Activated B cell treated with CpG ODN at 0.5 μM for 24 hours (primary cell): ENCODE measurements at regions of chr20 and their contacts with region 1.

Region 1: GRCh38 chr20:50041246-50041873 is 58.6 kb downstream of the SNAI1 start:
- DNase-seq: peak; percentile 26
- ATAC-seq: peak; percentile 91
- H3K4me3 Mint-ChIP-seq: peak overlapping the region; percentile 73
- H3K27ac Mint-ChIP-seq: peak overlapping the region; percentile 89
- H3K4me1 Mint-ChIP-seq: peaks cover 20% of the 10 kb centered on the region
- H3K27me3 Mint-ChIP-seq: no peaks in the 10 kb centered on the region
- CTCF ChIP-seq: no peak

Region 2: GRCh38 chr20:49999329-49999728 is 42.0 kb before region 1 on chr20:
- CTCF ChIA-PET with region 1: no interaction called
- POLR2A ChIA-PET with region 1: interaction called, 15 read pairs
- intact Hi-C with region 1: loop called (anchors 1 kb)
- DNase-seq: peak; percentile 68
- ATAC-seq: peak; percentile 99
- H3K4me3 Mint-ChIP-seq: peak overlapping the region; percentile 44
- H3K27ac Mint-ChIP-seq: peak overlapping the region; percentile 14
- H3K4me1 Mint-ChIP-seq: peaks cover 24% of the 10 kb centered on the region
- H3K27me3 Mint-ChIP-seq: peaks cover 4% of the 10 kb centered on the region
- CTCF ChIP-seq: no peak

Region 3: GRCh38 chr20:50065325-50065615 is 23.9 kb after region 1 on chr20:
- CTCF ChIA-PET with region 1: no interaction called
- POLR2A ChIA-PET with region 1: no interaction called
- intact Hi-C with region 1: no loop called
- DNase-seq: no peak
- ATAC-seq: no peak
- H3K4me3 Mint-ChIP-seq: no peak overlapping the region
- H3K27ac Mint-ChIP-seq: no peak overlapping the region
- H3K4me1 Mint-ChIP-seq: no peaks in the 10 kb centered on the region
- H3K27me3 Mint-ChIP-seq: peaks cover 7% of the 10 kb centered on the region
- CTCF ChIP-seq: no peak

Region 4: DNA sequence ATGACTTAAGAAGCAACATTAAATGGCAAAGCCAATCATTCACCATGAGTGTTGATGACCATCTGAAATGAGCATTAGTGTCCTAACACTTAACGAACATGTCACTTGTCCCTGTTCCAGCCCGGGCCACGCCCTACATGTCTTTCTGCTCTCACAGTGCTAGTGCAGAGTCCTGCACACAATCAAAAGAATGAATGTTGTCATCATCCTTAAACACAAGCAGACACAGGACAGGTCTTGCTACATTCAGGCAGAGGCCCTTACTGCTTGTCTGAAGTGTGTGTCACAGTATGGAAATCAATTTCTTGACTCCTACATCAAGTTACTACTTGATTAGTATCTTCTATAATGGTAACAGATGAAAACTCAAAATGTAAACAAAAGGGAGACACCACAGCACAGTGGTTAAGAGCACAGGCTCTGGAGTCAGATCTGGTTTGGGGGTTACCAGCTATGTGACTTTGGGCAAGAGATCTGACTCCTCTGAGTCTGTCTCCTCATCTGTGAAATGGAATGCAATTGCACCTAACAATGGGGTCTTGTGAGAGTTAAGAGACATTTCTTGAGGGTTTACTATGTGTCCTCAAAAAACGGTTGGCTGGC is 54.2 kb after region 1 on chr20:
- CTCF ChIA-PET with region 1: no interaction called
- POLR2A ChIA-PET with region 1: no interaction called
- intact Hi-C with region 1: no loop called
- DNase-seq: no peak
- ATAC-seq: no peak
- H3K4me3 Mint-ChIP-seq: no peak overlapping the region
- H3K27ac Mint-ChIP-seq: no peak overlapping the region
- H3K4me1 Mint-ChIP-seq: peaks cover 22% of the 10 kb centered on the region
- H3K27me3 Mint-ChIP-seq: no peaks in the 10 kb centered on the region
- CTCF ChIP-seq: no peak

Region 5: DNA sequence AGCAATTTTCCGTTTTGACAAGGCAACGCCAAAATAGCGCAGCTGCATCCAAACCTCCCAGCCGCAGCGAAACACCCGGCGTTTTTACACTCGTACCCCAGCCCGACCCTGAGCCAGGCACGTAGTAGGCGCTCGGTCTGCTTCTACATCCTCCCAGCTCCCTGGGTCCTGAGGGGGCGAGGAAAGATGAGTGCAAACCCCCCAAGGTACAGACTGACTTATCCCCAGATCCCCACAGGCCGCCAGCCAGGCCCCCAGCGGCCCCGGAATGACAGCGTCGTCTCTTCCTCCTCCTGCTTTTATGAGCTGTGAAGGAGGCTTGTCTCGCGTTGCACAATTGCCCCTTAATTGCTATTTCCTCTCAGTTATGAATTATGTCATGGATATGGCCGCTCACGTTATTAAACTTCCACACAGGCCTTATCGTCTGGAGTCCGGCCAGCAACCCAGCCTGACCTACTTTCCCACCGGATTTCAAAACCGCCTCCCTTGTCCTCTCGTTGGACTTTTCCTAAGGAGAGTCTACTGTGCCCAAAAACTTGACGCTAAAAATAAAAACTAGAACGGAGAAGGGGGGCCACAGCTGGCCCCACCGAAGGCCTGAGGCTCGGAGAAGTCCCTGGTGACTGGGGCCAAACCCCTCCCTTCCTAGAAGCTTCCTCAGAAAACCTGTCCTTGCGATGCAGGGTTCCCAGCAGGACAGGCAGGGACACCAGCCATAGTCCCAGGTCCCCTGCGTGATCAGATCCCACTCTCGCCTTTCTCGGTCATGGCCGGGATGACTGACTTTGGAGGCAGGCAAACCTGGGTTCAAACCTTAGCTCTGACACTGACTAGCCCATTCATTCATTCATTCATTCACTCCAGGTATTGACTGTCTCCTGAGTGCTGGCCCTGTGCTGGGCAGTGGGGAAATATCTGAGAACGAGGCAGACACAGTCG is 338.0 kb after region 1 on chr20:
- CTCF ChIA-PET with region 1: no interaction called
- POLR2A ChIA-PET with region 1: no interaction called
- intact Hi-C with region 1: no loop called
- DNase-seq: no peak
- ATAC-seq: no peak
- H3K4me3 Mint-ChIP-seq: no peak overlapping the region
- H3K27ac Mint-ChIP-seq: no peak overlapping the region
- H3K4me1 Mint-ChIP-seq: peaks cover 11% of the 10 kb centered on the region
- H3K27me3 Mint-ChIP-seq: peaks cover 22% of the 10 kb centered on the region
- CTCF ChIP-seq: no peak